A549 (cell line): ENCODE measurements at regions of chr1 and their contacts with region 1.

Region 1: DNA sequence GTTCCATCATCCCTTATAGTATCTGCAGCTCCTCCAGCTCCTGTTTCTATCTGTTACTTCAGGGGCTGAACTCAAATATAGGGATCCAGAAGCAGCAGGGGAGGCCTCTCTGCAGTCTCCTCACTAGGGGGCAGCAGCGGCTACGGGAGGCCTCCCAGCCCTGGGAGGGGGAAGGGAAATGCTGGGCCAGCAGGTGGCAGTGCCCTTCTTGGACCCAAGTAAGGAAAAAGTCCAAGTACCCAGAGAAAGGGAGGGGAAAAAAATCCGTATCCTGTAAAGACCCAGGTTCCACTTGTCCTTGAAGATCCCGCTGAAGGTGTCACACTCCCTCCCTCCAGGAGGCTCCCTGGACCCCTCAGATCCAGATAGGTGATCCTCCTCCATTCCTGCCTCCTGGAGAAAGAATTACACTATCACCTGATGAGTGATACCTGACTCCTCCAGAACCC is 14.1 kb upstream of the NUAK2 start:
- DNase-seq: peak; percentile 89 to 90
- ATAC-seq: peak; percentile 91 to 97
- H3K4me3 ChIP-seq: no peak overlapping the region
- H3K27ac ChIP-seq: no peak overlapping the region
- H3K4me1 ChIP-seq: peaks cover under 1% of the 10 kb centered on the region; the same call in 1 of the 3 replicates
- CTCF ChIP-seq: peak; percentile 99
- EP300 ChIP-seq: no peak
- POLR2A ChIP-seq: no peak
- RAD21 ChIP-seq: peak; percentile 88 to 92

Region 2: DNA sequence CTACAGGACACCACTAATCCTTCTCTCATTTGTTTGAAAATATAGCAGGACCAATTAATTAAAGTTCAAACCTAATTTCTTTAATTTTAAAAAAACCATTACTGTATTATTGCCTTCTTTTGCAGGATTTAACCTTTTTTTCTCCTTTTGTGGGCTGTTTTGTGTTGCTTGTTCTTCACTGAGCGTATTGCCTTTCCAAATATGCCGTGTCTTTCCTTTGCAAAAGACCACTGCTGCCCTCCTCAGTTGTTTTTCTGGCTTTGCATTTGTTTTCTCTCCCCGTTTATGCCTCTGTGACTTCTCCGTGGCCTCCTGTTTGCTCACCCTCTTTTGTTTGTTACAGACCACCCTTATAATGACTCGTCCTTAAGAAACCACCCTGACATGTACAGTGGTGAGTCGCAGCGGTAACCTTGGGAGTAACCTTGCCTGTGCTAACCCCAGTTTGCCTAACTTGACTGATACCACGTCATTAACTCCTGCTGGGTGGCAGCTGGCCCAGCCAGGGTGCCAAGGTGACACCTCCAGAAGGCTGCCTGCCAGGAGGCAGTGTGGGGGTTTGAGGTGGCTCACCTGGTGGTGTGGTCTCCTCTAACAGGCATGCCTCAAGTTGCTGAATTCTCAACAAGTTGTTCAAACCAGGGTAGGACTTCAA is 373.8 kb before region 1 on chr1:
- CTCF ChIA-PET with region 1: no interaction called
- POLR2A ChIA-PET with region 1: no interaction called
- DNase-seq: no peak
- ATAC-seq: no peak
- H3K4me3 ChIP-seq: no peak overlapping the region
- H3K27ac ChIP-seq: no peak overlapping the region
- H3K4me1 ChIP-seq: no peaks in the 10 kb centered on the region
- CTCF ChIP-seq: no peak
- EP300 ChIP-seq: no peak
- POLR2A ChIP-seq: no peak
- RAD21 ChIP-seq: peak in 1 of 2 experiments; percentile 17; a peak in 1 of 5 replicates

Region 3: DNA sequence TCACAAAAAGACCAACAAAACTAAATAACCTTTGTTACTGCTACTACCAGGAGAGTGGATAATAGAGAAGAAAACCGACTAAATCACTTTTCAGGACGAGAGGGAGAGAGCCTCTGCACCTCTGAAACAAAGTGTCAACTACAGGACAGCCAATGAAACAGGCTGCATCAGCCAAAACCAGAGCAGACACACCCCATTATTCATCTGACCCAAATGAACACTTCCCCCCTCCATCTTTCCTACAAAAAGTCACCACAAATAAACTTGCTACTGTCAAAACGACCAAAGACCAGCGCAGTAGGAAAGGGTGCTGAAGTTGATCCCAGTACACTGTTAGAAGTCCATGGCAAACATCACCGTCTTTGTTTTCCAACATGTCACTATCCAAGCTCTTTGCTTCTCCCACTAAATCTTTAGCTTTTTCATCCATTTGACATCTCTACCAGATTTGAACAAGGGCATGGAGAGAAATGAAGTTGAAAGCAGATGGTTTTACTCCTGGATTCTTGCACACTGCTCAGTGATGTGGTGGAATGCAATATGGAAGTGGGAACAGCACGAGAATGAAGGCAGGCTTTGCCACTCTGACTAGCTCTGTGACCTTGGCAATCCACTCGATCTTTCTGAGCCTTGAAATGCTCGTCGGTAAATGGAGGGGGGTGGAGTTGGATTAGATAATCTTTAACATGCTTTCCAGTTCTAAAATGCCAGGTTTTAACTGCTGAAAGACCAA is 144.7 kb before region 1 on chr1:
- CTCF ChIA-PET with region 1: no interaction called
- POLR2A ChIA-PET with region 1: no interaction called
- DNase-seq: no peak
- ATAC-seq: peak in 1 of 2 experiments; percentile 53; a peak in 4 of 6 replicates
- H3K4me3 ChIP-seq: no peak overlapping the region
- H3K27ac ChIP-seq: peak overlapping the region in 1 of 2 experiments; percentile 14; a peak in 1 of 6 replicates
- H3K4me1 ChIP-seq: peaks cover 23% of the 10 kb centered on the region
- CTCF ChIP-seq: no peak
- EP300 ChIP-seq: no peak
- POLR2A ChIP-seq: no peak
- RAD21 ChIP-seq: no peak

Region 4: GRCh38 chr1:205375835-205376545 is 40.3 kb after region 1 on chr1:
- CTCF ChIA-PET with region 1: interaction called, 12 read pairs
- POLR2A ChIA-PET with region 1: no interaction called
- DNase-seq: peak; percentile 54 to 69
- ATAC-seq: peak; percentile 84 to 88
- H3K4me3 ChIP-seq: no peak overlapping the region
- H3K27ac ChIP-seq: peak overlapping the region; percentile 36 to 66; a peak in 5 of 6 replicates
- H3K4me1 ChIP-seq: peaks cover 44% of the 10 kb centered on the region
- CTCF ChIP-seq: no peak
- EP300 ChIP-seq: no peak
- POLR2A ChIP-seq: no peak
- RAD21 ChIP-seq: no peak

Region 5: GRCh38 chr1:205477759-205478247 is 142.1 kb after region 1 on chr1:
- CTCF ChIA-PET with region 1: interaction called, 161 read pairs
- POLR2A ChIA-PET with region 1: no interaction called
- DNase-seq: peak; percentile 52 to 84
- ATAC-seq: peak; percentile 49 to 84
- H3K4me3 ChIP-seq: no peak overlapping the region
- H3K27ac ChIP-seq: peak overlapping the region; percentile 58 to 66; a peak in 4 of 6 replicates
- H3K4me1 ChIP-seq: peaks cover 17% of the 10 kb centered on the region
- CTCF ChIP-seq: no peak
- EP300 ChIP-seq: no peak
- POLR2A ChIP-seq: no peak
- RAD21 ChIP-seq: no peak

Region 6: DNA sequence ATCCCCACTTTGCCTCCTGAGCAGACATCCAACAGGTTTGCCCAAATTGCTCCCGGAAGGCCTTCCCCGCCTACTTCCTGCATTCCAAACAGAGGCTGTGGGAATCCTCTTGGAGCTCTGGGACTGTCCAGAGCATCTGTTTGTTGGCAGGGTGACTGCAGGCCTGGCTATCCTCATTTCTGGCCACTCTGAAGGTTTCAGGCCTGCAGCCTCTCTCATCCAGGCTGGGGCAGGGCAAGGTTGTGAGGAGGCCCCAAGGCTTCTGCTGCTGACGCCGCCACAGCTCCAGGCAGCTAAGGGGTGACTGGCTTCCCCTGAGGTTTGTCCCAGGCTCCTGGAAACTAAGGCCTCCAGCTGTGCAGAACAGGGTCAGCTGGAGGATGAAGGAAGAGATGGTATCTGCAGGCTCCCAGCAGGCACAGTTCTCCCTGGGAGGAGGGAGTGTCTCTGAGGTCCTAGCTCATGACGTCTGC is 180.2 kb after region 1 on chr1:
- CTCF ChIA-PET with region 1: interaction called, 315 read pairs
- POLR2A ChIA-PET with region 1: no interaction called
- DNase-seq: no peak
- ATAC-seq: no peak
- H3K4me3 ChIP-seq: no peak overlapping the region
- H3K27ac ChIP-seq: no peak overlapping the region
- H3K4me1 ChIP-seq: 0 out of 3 replicates have a peak, but pooled peaks cover 3% of the 10 kb centered on the region
- CTCF ChIP-seq: no peak
- EP300 ChIP-seq: no peak
- POLR2A ChIP-seq: no peak
- RAD21 ChIP-seq: no peak

Region 7: DNA sequence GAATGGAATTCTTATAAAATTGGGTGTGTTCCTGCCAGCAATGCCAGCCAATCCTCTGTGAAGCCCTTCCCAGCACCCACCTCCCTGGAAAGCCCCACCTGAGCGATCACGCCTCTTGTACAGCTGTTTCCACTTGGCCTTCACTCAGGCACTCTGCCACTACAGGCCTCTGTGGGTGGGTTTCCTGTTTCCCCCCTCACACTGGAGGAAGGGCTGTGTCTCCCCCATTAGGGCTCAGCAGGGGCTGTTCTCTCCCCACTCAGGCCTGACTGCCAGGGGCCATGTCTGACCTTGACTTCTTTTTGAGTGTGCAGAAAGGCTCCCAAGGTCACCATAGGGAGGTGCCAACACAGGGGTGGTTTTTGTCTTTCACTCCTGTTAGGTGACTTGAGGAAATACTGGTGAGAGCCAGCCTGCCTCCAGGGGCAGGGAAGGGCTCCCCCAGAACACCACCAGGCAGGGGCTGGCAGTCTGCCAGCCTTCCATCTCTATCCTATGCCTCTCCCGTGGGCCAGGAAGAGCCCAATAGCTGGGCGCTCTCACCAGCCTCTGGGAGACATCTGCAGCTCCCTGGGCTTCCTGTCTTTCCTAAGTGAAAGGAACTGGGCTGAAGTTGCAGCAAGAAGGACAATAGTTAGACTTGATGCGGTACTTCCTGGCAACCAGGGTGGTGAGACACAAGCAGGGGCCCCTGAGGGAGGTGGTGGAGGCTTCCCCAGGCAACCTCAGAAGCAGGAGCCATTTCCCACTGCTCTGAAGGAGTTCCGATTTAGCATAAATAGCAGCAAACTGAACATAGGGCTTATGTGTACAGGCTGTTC is 247.0 kb after region 1 on chr1:
- CTCF ChIA-PET with region 1: no interaction called
- POLR2A ChIA-PET with region 1: no interaction called
- DNase-seq: no peak
- ATAC-seq: peak in 1 of 2 experiments; percentile 12; a peak in 1 of 6 replicates
- H3K4me3 ChIP-seq: no peak overlapping the region
- H3K27ac ChIP-seq: no peak overlapping the region
- H3K4me1 ChIP-seq: no peaks in the 10 kb centered on the region; the same call in 2 of the 3 replicates
- CTCF ChIP-seq: no peak
- EP300 ChIP-seq: no peak
- POLR2A ChIP-seq: no peak
- RAD21 ChIP-seq: no peak